Activated CD4-positive, alpha-beta memory T cell treated with anti-CD3 and anti-CD28 coated beads, Interleukin-2, amount 10 ng/mL, durations not matched to agents 7 days and 5 days (primary cell): ENCODE measurements at regions of chr5 and their contacts with region 1.

Region 1: GRCh38 chr5:10249948-10250803 is at the start of gene CCT5:
- DNase-seq: peak; percentile 91
- H3K4me3 Mint-ChIP-seq: peak within 1 kb of the TSS; percentile 81
- H3K27ac Mint-ChIP-seq: peak within 1 kb of the TSS; percentile 93
- H3K4me1 Mint-ChIP-seq: peaks cover 59% of the 10 kb centered on the region
- H3K27me3 Mint-ChIP-seq: no peaks in the 10 kb centered on the region
- total RNA-seq, gene CCT5: 220 to 223 TPM

Region 2: DNA sequence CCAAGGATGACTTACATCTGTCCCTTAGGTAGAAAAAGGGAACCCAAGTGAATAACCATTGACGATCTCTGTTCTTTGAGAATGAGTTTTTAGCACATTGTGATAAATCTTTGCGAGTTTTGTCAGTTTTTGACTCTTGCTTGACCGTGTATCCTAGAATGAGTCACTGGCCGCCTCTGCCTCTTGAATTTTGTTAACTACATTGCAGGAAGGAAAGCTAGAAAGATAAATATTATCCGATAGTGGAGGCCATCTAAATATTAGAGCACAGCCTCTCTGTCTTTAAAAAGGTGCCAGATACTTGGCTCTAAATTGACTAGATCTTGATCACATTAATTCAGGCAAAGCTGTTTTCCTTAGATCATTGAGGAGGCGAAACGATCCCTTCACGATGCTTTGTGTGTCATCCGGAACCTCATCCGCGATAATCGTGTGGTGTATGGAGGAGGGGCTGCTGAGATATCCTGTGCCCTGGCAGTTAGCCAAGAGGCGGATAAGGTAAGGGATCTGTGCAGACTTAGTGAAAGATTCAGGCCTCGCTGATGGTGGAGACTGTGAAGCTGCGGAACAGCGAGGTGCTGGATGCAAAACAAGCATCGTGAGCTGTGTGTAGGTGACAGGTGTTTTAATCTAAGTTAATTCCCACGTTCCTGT is 12.1 kb after region 1 on chr5:
- CTCF ChIA-PET with region 1: no interaction called
- POLR2A ChIA-PET with region 1: interaction called, 34 read pairs
- DNase-seq: no peak
- H3K4me3 Mint-ChIP-seq: no peak overlapping the region
- H3K27ac Mint-ChIP-seq: no peak overlapping the region
- H3K4me1 Mint-ChIP-seq: peaks cover 16% of the 10 kb centered on the region
- H3K27me3 Mint-ChIP-seq: no peaks in the 10 kb centered on the region

Region 3: GRCh38 chr5:10635257-10635866 is 385.2 kb after region 1 on chr5:
- CTCF ChIA-PET with region 1: no interaction called
- POLR2A ChIA-PET with region 1: interaction called, 12 read pairs
- DNase-seq: peak; percentile 87
- H3K4me3 Mint-ChIP-seq: peak overlapping the region; percentile 69
- H3K27ac Mint-ChIP-seq: peak overlapping the region; percentile 97
- H3K4me1 Mint-ChIP-seq: peaks cover 74% of the 10 kb centered on the region
- H3K27me3 Mint-ChIP-seq: no peaks in the 10 kb centered on the region